ENCODE measurements at regions of chr1 and their contacts with region 1.

Region 1: GRCh38 chr1:235105051-235106043 is 23.3 kb downstream of the TOMM20 start:
- DNase-seq: peak; percentile 13
- H3K4me3 ChIP-seq: peak overlapping the region; percentile 30
- H3K27ac ChIP-seq: peak overlapping the region; percentile 38
- H3K4me1 ChIP-seq: peaks cover 16% of the 10 kb centered on the region
- CTCF ChIP-seq: no peak

Region 2: DNA sequence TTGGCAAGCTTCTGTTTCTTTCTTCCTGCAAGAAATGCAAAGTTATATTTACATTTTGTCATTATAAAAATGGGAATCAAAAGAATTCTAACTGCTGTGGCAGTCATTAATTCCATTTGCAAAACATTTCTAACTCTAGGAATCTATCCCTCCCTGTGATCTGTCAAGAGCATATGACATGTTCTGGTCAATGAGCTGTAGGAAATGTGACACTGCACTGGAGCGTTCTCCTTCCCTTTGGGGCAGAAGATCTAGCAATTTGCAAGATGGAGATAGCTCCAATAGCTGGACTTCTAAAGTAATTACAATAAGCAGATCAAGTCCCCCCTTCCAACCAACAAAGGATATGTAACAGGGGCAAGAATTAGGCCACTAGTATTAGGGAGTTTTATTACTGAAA is 17.0 kb after region 1 on chr1:
- CTCF ChIA-PET with region 1: interaction called, 4 read pairs
- POLR2A ChIA-PET with region 1: interaction called, 13 read pairs
- intact Hi-C with region 1: no loop called
- DNase-seq: no peak
- H3K4me3 ChIP-seq: no peak overlapping the region
- H3K27ac ChIP-seq: no peak overlapping the region
- H3K4me1 ChIP-seq: peaks cover 38% of the 10 kb centered on the region
- CTCF ChIP-seq: no peak

Region 3: GRCh38 chr1:235160957-235161684 is 55.8 kb after region 1 on chr1 and contains the start of gene RBM34:
- CTCF ChIA-PET with region 1: no interaction called
- POLR2A ChIA-PET with region 1: interaction called, 7 read pairs
- intact Hi-C with region 1: loop called (anchors 2 kb)
- DNase-seq: peak; percentile 92
- H3K4me3 ChIP-seq: peak within 1 kb of the TSS; percentile 85
- H3K27ac ChIP-seq: peak within 1 kb of the TSS; percentile 64
- H3K4me1 ChIP-seq: peaks cover 18% of the 10 kb centered on the region
- CTCF ChIP-seq: peak; percentile 38; the same call in 1 of the 2 replicates
- total RNA-seq, gene RBM34: 46.4 and 53.6 TPM in 2 replicates

Measured in OCI-LY7 (cell line).